ENCODE measurements at regions of chr17 and their contacts with region 1.

Region 1: GRCh38 chr17:35119368-35120165 is at the start of gene RAD51D:
- DNase-seq: peak; percentile 72 to 86 (median 81)
- H3K4me3 ChIP-seq: peak within 1 kb of the TSS; percentile 67 to 98
- H3K4me3 Mint-ChIP-seq: peak within 1 kb of the TSS; percentile 90 to 98 (median 94)
- H3K27ac ChIP-seq: peak within 1 kb of the TSS; percentile 80
- H3K27ac Mint-ChIP-seq: peak within 1 kb of the TSS; percentile 85 to 98 (median 94)
- H3K4me1 ChIP-seq: peaks cover 24% of the 10 kb centered on the region
- H3K4me1 Mint-ChIP-seq: peaks cover 24 to 45% (median 32%) of the 10 kb centered on the region in 4 donors
- H3K27me3 ChIP-seq: no peaks in the 10 kb centered on the region
- H3K27me3 Mint-ChIP-seq: peaks cover 0 to 1% of the 10 kb centered on the region in 2 donors
- total RNA-seq, gene RAD51D: 21.5 to 29.2 TPM

Region 2: DNA sequence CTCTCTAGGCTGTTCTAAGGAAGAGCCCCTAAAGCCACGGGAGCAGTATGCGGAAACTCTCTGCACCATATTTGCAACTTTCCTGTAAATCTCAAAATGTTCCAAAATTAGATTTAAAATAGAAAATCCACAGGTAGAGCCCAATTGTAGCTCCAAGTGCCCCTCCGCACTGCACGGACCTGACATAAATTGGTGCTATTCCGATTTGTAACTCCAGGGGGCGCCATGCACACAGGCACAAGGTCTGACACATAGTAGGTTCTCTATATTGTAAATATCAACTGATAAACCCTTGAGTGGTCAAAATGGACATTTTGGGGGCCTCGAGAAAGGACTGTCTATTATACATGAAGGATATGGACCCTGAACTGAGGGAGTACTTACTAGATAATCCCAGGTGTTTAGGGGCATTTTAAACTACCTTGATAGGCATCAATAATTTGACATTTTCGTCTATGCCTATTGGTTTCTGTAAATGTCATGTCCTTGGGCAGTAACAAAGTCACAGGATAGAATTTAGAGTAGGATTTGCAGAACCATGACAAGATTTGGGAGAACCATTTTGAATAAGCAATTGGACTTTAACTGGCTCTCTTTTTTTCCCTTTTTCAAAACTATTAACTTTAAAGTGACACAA is 576.7 kb before region 1 on chr17:
- CTCF ChIA-PET with region 1: interaction called, 54 read pairs
- POLR2A ChIA-PET with region 1: interaction called, 3 read pairs
- intact Hi-C with region 1: no loop called
- DNase-seq: peak in 4 of 5 donors; percentile 41 to 52 (median 48)
- H3K4me3 ChIP-seq: no peak overlapping the region
- H3K4me3 Mint-ChIP-seq: no peak overlapping the region
- H3K27ac ChIP-seq: no peak overlapping the region
- H3K27ac Mint-ChIP-seq: no peak overlapping the region
- H3K4me1 ChIP-seq: no peaks in the 10 kb centered on the region
- H3K4me1 Mint-ChIP-seq: no peaks in the 10 kb centered on the region
- H3K27me3 ChIP-seq: no peaks in the 10 kb centered on the region
- H3K27me3 Mint-ChIP-seq: peaks cover 17 to 26% of the 10 kb centered on the region in 2 donors

Region 3: DNA sequence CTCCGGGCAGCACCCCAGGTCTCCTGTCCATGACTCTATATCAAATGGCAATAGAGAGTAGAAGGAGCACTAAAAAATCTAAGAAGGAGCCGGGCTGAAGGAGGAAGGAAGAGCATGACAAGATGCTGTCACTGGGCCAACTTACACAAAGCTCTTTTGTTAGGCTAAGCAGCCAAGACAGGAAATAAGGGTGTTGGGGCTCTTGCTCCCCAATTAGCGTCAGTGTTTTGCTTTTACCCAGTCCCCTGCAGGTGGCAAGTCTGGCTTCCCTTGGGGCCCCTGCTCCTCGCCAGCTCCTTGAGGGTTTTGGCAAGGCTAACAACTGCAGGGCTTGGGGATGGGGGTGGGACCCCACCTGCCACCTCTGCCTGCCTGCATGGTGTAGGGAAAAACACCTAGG is 278.8 kb before region 1 on chr17:
- CTCF ChIA-PET with region 1: no interaction called
- POLR2A ChIA-PET with region 1: no interaction called
- intact Hi-C with region 1: loop called (anchors 5 kb)
- DNase-seq: peak in 4 of 5 donors; percentile 39 to 51 (median 49)
- H3K4me3 ChIP-seq: peak overlapping the region in 1 of 2 donors; percentile 5
- H3K4me3 Mint-ChIP-seq: peak overlapping the region in 5 of 8 donors; percentile 11 to 58 (median 34)
- H3K27ac ChIP-seq: no peak overlapping the region
- H3K27ac Mint-ChIP-seq: peak overlapping the region; percentile 72 to 93 (median 81)
- H3K4me1 ChIP-seq: peaks cover 67% of the 10 kb centered on the region
- H3K4me1 Mint-ChIP-seq: peaks cover 0 to 23% (median 11%) of the 10 kb centered on the region in 4 donors
- H3K27me3 ChIP-seq: peaks cover 3% of the 10 kb centered on the region
- H3K27me3 Mint-ChIP-seq: peaks cover 0 to 2% of the 10 kb centered on the region in 2 donors

Region 4: GRCh38 chr17:34990921-34991365 is 128.6 kb before region 1 on chr17:
- CTCF ChIA-PET with region 1: interaction called, 96 read pairs
- POLR2A ChIA-PET with region 1: interaction called, 7 read pairs
- intact Hi-C with region 1: no loop called
- DNase-seq: no peak
- H3K4me3 ChIP-seq: no peak overlapping the region
- H3K4me3 Mint-ChIP-seq: no peak overlapping the region
- H3K27ac ChIP-seq: no peak overlapping the region
- H3K27ac Mint-ChIP-seq: peak overlapping the region in 3 of 7 donors; percentile 4 to 41 (median 32)
- H3K4me1 ChIP-seq: no peaks in the 10 kb centered on the region
- H3K4me1 Mint-ChIP-seq: peaks cover 0 to 8% (median 5%) of the 10 kb centered on the region in 4 donors
- H3K27me3 ChIP-seq: no peaks in the 10 kb centered on the region
- H3K27me3 Mint-ChIP-seq: no peaks in the 10 kb centered on the region

Region 5: GRCh38 chr17:35022536-35023063 is 97.0 kb before region 1 on chr17:
- CTCF ChIA-PET with region 1: interaction called, 13 read pairs
- POLR2A ChIA-PET with region 1: interaction called, 3 read pairs
- intact Hi-C with region 1: no loop called
- DNase-seq: peak; percentile 59 to 84 (median 62)
- H3K4me3 ChIP-seq: no peak overlapping the region
- H3K4me3 Mint-ChIP-seq: peak overlapping the region; percentile 57 to 76 (median 66)
- H3K27ac ChIP-seq: peak overlapping the region; percentile 66
- H3K27ac Mint-ChIP-seq: peak overlapping the region; percentile 92 to 98 (median 96)
- H3K4me1 ChIP-seq: peaks cover 42% of the 10 kb centered on the region
- H3K4me1 Mint-ChIP-seq: peaks cover 45 to 70% (median 58%) of the 10 kb centered on the region in 4 donors
- H3K27me3 ChIP-seq: no peaks in the 10 kb centered on the region
- H3K27me3 Mint-ChIP-seq: no peaks in the 10 kb centered on the region

Region 6: GRCh38 chr17:35088881-35089585 is 30.5 kb before region 1 on chr17:
- CTCF ChIA-PET with region 1: interaction called, 26 read pairs
- POLR2A ChIA-PET with region 1: interaction called, 21 read pairs
- intact Hi-C with region 1: loop called (anchors 1 kb)
- DNase-seq: peak; percentile 86 to 95 (median 88)
- H3K4me3 ChIP-seq: peak overlapping the region; percentile 76 to 96
- H3K4me3 Mint-ChIP-seq: peak overlapping the region; percentile 93 to 99 (median 96)
- H3K27ac ChIP-seq: peak overlapping the region; percentile 97
- H3K27ac Mint-ChIP-seq: peak overlapping the region; percentile 92 to 99 (median 97)
- H3K4me1 ChIP-seq: peaks cover 42% of the 10 kb centered on the region
- H3K4me1 Mint-ChIP-seq: peaks cover 28 to 55% (median 40%) of the 10 kb centered on the region in 4 donors
- H3K27me3 ChIP-seq: no peaks in the 10 kb centered on the region
- H3K27me3 Mint-ChIP-seq: no peaks in the 10 kb centered on the region

Region 7: DNA sequence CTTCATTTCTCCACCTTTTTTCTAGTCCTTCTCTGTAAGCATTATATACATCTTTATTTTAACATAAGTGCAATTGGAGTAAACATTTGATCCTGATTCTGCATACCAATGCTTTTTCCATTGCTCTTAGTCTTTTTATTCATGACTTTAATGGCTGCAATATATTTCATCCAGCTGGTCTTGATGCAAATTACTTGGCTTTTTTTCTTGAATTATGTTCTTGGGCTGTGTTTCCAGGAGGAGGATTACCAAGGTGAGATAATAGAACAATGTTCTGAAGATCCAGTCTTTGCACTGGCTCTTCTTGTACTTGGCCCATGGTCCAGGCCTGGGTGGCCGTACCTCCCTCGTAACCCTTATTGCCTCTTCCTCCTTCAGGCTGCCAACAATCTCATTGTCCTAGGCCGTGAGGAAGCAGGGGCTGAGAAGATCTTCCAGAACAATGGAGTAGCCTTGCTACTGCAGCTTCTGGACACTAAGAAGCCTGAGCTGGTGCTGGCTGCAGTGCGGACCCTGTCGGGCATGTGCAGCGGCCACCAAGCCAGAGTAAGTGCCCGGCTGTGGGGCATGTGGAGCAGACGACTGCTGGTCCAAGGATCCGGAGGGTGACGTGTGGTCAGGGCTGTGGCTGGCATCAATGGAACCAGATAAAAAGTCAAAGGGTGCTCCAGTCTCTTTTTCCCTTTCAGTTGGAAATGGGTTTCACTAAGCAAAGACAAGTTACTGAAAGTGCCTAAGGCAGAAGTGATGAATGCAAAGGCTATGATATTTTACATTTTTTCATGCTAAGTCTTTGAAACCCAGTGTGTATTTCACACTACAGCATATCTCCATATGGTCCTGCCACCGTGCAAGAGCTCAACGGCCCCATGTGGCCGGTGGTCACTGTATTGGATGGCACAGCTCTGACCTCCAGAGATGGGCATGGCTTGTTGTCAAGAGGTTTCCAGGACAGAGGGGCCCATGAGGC is 34.9 kb after region 1 on chr17:
- CTCF ChIA-PET with region 1: no interaction called
- POLR2A ChIA-PET with region 1: no interaction called
- intact Hi-C with region 1: no loop called
- DNase-seq: no peak
- H3K4me3 ChIP-seq: no peak overlapping the region
- H3K4me3 Mint-ChIP-seq: no peak overlapping the region
- H3K27ac ChIP-seq: no peak overlapping the region
- H3K27ac Mint-ChIP-seq: no peak overlapping the region
- H3K4me1 ChIP-seq: peaks cover 6% of the 10 kb centered on the region
- H3K4me1 Mint-ChIP-seq: peaks cover 2 to 13% (median 9%) of the 10 kb centered on the region in 4 donors
- H3K27me3 ChIP-seq: no peaks in the 10 kb centered on the region
- H3K27me3 Mint-ChIP-seq: no peaks in the 10 kb centered on the region

Region 8: GRCh38 chr17:35747540-35748017 is 628.0 kb after region 1 on chr17:
- CTCF ChIA-PET with region 1: interaction called, 16 read pairs
- POLR2A ChIA-PET with region 1: no interaction called
- intact Hi-C with region 1: loop called (anchors 1 kb)
- DNase-seq: peak; percentile 72 to 76 (median 75)
- H3K4me3 ChIP-seq: no peak overlapping the region
- H3K4me3 Mint-ChIP-seq: no peak overlapping the region
- H3K27ac ChIP-seq: no peak overlapping the region
- H3K27ac Mint-ChIP-seq: no peak overlapping the region
- H3K4me1 ChIP-seq: no peaks in the 10 kb centered on the region
- H3K4me1 Mint-ChIP-seq: peaks cover 0 to 9% (median 2%) of the 10 kb centered on the region in 4 donors
- H3K27me3 ChIP-seq: peaks cover 27% of the 10 kb centered on the region
- H3K27me3 Mint-ChIP-seq: peaks cover 24 to 38% of the 10 kb centered on the region in 2 donors